Activated CD8-positive, alpha-beta T cell treated with anti-CD3 and anti-CD28 coated beads for 36 hours (primary cell): ENCODE measurements at regions of chr16 and their contacts with region 1.

Region 1: DNA sequence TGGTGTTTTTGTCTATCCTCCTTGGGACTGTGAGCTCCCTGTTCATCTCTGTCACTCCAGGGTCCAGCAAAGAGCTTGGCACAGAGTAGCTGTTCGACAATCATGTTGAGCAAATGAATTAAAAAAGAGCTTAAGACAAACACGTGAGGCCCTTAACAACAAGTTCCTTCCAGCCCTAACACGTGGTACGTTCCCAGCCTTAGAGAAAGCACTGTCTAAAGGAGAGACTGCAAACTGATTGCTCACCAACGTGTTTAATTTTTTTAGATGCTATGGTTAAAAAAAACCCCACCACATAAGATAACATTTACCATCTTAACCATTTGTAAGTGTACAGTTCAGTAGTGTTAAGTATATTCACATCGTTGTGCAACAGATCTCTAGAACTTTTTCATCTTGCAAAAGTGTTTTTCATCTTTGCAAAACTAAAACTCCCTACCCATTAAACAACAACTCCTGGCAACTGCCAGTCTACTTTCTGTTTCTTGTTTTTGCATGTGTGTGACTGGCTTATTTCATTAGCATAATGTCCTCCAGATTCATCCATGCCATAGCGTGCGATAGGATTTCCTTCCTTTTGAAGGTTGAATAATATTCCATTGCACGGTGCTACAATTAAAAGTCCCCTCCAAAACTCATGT is 28.2 kb downstream of the LAT start:
- DNase-seq: peak; percentile 52
- ATAC-seq: peak; percentile 29
- H3K4me3 Mint-ChIP-seq: peak overlapping the region; percentile 2
- H3K27ac Mint-ChIP-seq: peak overlapping the region; percentile 91
- H3K4me1 Mint-ChIP-seq: peaks cover 59% of the 10 kb centered on the region
- H3K27me3 Mint-ChIP-seq: no peaks in the 10 kb centered on the region
- CTCF ChIP-seq: no peak

Region 2: GRCh38 chr16:29023279-29024277 is 10.5 kb after region 1 on chr16:
- CTCF ChIA-PET with region 1: interaction called, 7 read pairs
- POLR2A ChIA-PET with region 1: interaction called, 12 read pairs
- intact Hi-C with region 1: no loop called
- DNase-seq: peak; percentile 45
- ATAC-seq: peak; percentile 8
- H3K4me3 Mint-ChIP-seq: peak overlapping the region; percentile 52
- H3K27ac Mint-ChIP-seq: peak overlapping the region; percentile 91
- H3K4me1 Mint-ChIP-seq: peaks cover 79% of the 10 kb centered on the region
- H3K27me3 Mint-ChIP-seq: no peaks in the 10 kb centered on the region
- CTCF ChIP-seq: no peak